ENCODE measurements at regions of chr13 and their contacts with region 1.

Region 1: DNA sequence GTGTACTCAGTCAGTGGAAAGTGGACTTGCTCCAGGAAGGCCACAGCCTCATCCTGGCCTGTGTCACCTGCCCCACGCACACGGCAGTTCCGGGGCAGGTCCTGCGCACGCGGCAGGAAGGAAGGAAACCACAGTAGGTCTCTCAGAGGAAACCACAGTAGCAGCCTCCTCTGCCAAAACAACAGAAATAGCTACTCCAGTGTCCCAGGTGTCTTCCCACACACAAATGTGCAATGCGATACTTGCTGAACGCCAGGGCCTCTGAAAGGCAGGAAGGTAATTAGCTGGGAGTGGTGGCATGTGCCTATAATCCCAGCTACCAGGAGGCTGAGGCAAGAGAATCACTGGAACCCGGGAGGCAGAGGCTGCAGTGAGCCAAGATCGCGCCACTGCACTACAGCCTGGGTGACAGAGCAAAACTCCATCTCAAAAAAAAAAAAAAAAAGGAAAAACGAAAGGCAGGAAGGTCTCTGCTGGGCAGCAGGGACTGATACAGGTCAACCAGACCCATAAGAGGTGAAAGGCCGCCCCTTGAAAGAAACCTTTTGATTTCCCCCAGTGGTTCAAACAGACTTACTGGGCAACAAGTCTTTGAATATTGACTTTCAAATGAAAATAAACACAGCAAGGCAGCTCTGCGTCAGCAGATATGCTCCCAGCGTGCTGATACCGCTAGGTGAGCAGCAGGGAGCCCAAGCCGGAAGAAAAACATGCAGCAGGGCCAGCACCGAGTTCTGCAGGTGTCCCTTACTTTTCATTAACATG is 49.5 kb downstream of the CRYL1 start:
- DNase-seq: peak; percentile 46 to 90 (median 84)
- ATAC-seq: peak; percentile 96
- H3K4me3 ChIP-seq: peak overlapping the region; percentile 59
- H3K4me3 Mint-ChIP-seq: peak overlapping the region; percentile 77 to 92 (median 86)
- H3K27ac ChIP-seq: peak overlapping the region; percentile 77
- H3K27ac Mint-ChIP-seq: peak overlapping the region; percentile 89 to 99 (median 98)
- H3K4me1 ChIP-seq: peaks cover 21 to 25% of the 10 kb centered on the region in 2 donors
- H3K4me1 Mint-ChIP-seq: peaks cover 18 to 79% (median 55%) of the 10 kb centered on the region in 7 donors
- H3K27me3 ChIP-seq: no peaks in the 10 kb centered on the region
- H3K27me3 Mint-ChIP-seq: peaks cover 0 to 5% (median 0%) of the 10 kb centered on the region in 5 donors

Region 2: DNA sequence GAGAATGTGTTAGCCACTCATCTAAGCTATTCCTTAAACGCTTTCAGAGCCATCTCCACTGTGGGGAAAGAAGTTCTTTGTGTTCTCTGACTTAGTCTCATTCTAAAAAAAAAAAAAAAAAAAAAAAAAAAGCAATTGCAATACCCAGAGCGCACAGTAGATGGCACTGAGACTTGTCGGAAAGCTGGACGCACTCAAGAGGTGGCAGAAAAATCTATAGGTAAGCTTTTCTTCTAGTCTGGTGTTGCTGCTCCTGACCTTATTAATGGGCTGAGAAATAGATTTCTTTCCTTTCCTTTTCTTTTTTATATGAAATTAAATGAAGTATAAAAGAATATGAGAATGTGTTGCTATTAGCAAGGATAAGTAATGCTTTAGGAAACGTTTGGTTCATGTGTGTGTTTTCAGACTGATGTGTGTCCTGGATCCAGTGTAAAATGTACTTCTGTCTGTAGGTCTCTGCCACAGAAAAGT is 278.7 kb before region 1 on chr13:
- CTCF ChIA-PET with region 1: no interaction called
- POLR2A ChIA-PET with region 1: no interaction called
- intact Hi-C with region 1: loop called in 1 of 2 experiments (anchors 1 kb)
- DNase-seq: peak in 5 of 9 donors; percentile 38 to 59 (median 51)
- ATAC-seq: peak; percentile 81
- H3K4me3 ChIP-seq: no peak overlapping the region
- H3K4me3 Mint-ChIP-seq: no peak overlapping the region
- H3K27ac ChIP-seq: no peak overlapping the region
- H3K27ac Mint-ChIP-seq: peak overlapping the region in 1 of 9 donors; percentile 57
- H3K4me1 ChIP-seq: peaks cover 11 to 20% of the 10 kb centered on the region in 2 donors
- H3K4me1 Mint-ChIP-seq: peaks cover 15 to 26% (median 19%) of the 10 kb centered on the region in 7 donors
- H3K27me3 ChIP-seq: peaks cover 27 to 41% of the 10 kb centered on the region in 2 donors
- H3K27me3 Mint-ChIP-seq: peaks cover 30 to 64% (median 48%) of the 10 kb centered on the region in 5 donors

Region 3: DNA sequence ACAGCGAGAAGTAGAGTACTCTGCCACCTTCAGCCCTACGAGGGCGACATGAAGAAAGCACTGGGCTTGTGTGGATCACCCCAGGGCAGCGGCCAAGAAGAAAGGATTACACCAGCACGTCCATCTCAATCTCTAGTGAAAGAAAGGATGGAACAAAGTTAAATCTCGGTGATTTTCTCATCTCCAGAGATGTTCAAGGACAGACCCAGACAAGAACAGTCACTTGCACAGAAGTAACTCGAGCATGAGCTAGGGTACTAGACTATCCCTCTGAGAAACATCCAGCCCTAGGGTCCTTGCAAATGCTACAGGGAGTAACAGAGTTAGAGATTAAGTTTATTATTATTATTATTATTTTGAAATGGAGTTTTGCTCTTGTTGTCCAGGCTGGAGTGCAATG is 57.2 kb before region 1 on chr13:
- CTCF ChIA-PET with region 1: no interaction called
- POLR2A ChIA-PET with region 1: no interaction called
- intact Hi-C with region 1: loop called (anchors 1 to 5 kb)
- DNase-seq: no peak
- ATAC-seq: no peak
- H3K4me3 ChIP-seq: no peak overlapping the region
- H3K4me3 Mint-ChIP-seq: peak overlapping the region in 6 of 10 donors; percentile 2 to 42 (median 14)
- H3K27ac ChIP-seq: no peak overlapping the region
- H3K27ac Mint-ChIP-seq: peak overlapping the region in 6 of 9 donors; percentile 9 to 71 (median 34)
- H3K4me1 ChIP-seq: peaks cover 9 to 13% of the 10 kb centered on the region in 2 donors
- H3K4me1 Mint-ChIP-seq: peaks cover 12 to 42% (median 30%) of the 10 kb centered on the region in 7 donors
- H3K27me3 ChIP-seq: no peaks in the 10 kb centered on the region
- H3K27me3 Mint-ChIP-seq: no peaks in the 10 kb centered on the region

Region 4: GRCh38 chr13:20495082-20496023 is 19.2 kb after region 1 on chr13:
- CTCF ChIA-PET with region 1: interaction called, 3 read pairs
- POLR2A ChIA-PET with region 1: interaction called, 9 read pairs
- intact Hi-C with region 1: loop called in 1 of 2 experiments (anchors 1 kb)
- DNase-seq: peak in 8 of 9 donors; percentile 41 to 75 (median 70)
- ATAC-seq: peak; percentile 95
- H3K4me3 ChIP-seq: no peak overlapping the region
- H3K4me3 Mint-ChIP-seq: no peak overlapping the region
- H3K27ac ChIP-seq: no peak overlapping the region
- H3K27ac Mint-ChIP-seq: peak overlapping the region in 5 of 9 donors; percentile 29 to 87 (median 52)
- H3K4me1 ChIP-seq: no peaks in the 10 kb centered on the region
- H3K4me1 Mint-ChIP-seq: peaks cover 5 to 17% (median 13%) of the 10 kb centered on the region in 7 donors
- H3K27me3 ChIP-seq: no peaks in the 10 kb centered on the region
- H3K27me3 Mint-ChIP-seq: no peaks in the 10 kb centered on the region

Region 5: DNA sequence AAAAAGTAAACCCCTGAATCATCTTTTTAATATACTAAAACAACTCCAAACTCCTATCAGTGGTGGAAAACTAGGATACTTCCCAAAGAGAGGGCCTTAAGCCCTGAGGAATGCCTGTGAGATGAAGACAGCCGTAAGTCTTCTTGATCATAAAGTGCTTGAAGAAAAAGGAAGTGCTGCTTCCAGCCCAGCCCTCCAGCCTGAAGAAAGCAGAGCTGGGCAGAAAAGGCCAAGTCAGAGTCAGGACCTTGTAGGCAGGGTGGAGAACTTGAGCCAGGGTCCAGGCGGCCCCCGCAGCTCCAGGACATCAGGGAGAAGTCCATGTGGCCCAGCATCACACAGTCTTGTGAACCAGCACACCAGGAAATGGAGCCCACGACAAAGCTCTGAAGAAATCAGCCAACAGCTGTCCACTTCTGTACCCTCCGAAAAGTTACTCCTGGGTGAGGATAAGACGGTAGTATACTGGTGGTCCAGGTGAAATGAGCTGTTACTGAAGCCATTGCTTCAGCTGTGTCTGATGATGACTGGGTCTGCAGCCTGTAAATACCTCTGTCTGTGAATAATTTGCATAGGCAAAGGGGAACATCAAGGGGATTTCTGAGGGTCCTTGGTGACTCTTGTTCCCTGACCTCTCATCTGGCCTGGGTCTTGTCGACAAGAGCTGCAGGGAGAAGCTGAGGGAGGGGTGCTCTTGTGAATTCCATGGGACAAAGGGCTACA is 68.3 kb after region 1 on chr13:
- CTCF ChIA-PET with region 1: no interaction called
- POLR2A ChIA-PET with region 1: no interaction called
- intact Hi-C with region 1: no loop called
- DNase-seq: no peak
- ATAC-seq: no peak
- H3K4me3 ChIP-seq: no peak overlapping the region
- H3K4me3 Mint-ChIP-seq: no peak overlapping the region
- H3K27ac ChIP-seq: no peak overlapping the region
- H3K27ac Mint-ChIP-seq: no peak overlapping the region
- H3K4me1 ChIP-seq: no peaks in the 10 kb centered on the region
- H3K4me1 Mint-ChIP-seq: peaks cover 3 to 15% (median 11%) of the 10 kb centered on the region in 7 donors
- H3K27me3 ChIP-seq: no peaks in the 10 kb centered on the region
- H3K27me3 Mint-ChIP-seq: no peaks in the 10 kb centered on the region

Region 6: DNA sequence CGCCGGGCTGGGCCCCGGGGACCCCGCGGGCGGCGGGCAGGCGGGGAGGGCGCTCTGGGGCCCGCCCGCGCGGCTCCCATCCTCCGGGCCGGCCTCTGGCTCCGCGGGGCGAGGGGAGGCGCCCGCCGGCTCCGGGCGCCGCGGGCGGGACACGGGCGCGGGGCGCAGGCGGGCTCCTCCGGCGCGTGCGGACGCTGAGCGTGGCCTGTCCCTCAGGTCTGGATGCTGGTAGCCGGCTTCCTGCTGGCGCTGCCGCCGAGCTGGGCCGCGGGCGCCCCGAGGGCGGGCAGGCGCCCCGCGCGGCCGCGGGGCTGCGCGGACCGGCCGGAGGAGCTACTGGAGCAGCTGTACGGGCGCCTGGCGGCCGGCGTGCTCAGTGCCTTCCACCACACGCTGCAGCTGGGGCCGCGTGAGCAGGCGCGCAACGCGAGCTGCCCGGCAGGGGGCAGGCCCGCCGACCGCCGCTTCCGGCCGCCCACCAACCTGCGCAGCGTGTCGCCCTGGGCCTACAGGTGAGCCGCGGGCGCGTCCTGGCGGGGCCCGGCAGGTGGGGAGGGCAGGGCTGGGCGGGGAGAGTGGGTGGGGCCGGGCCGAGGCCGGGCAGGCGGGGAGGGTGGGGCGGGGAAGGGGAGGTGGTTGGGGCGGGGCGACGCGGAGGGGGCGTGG is 227.8 kb after region 1 on chr13:
- CTCF ChIA-PET with region 1: no interaction called
- POLR2A ChIA-PET with region 1: interaction called, 3 read pairs
- intact Hi-C with region 1: loop called in 1 of 2 experiments (anchors 5 kb)
- DNase-seq: peak; percentile 70 to 84 (median 80)
- ATAC-seq: peak; percentile 93
- H3K4me3 ChIP-seq: no peak overlapping the region
- H3K4me3 Mint-ChIP-seq: peak overlapping the region in 4 of 10 donors; percentile 59 to 97 (median 72)
- H3K27ac ChIP-seq: no peak overlapping the region
- H3K27ac Mint-ChIP-seq: peak overlapping the region in 1 of 9 donors; percentile 56
- H3K4me1 ChIP-seq: peaks cover 3 to 8% of the 10 kb centered on the region in 2 donors
- H3K4me1 Mint-ChIP-seq: peaks cover 0 to 13% (median 8%) of the 10 kb centered on the region in 7 donors
- H3K27me3 ChIP-seq: peaks cover 0 to 5% of the 10 kb centered on the region in 2 donors
- H3K27me3 Mint-ChIP-seq: peaks cover 13 to 48% (median 17%) of the 10 kb centered on the region in 5 donors

Region 7: GRCh38 chr13:20714161-20714560 is 238.1 kb after region 1 on chr13:
- CTCF ChIA-PET with region 1: no interaction called
- POLR2A ChIA-PET with region 1: no interaction called
- intact Hi-C with region 1: no loop called
- DNase-seq: no peak
- ATAC-seq: no peak
- H3K4me3 ChIP-seq: no peak overlapping the region
- H3K4me3 Mint-ChIP-seq: no peak overlapping the region
- H3K27ac ChIP-seq: no peak overlapping the region
- H3K27ac Mint-ChIP-seq: no peak overlapping the region
- H3K4me1 ChIP-seq: no peaks in the 10 kb centered on the region
- H3K4me1 Mint-ChIP-seq: peaks cover 5 to 13% (median 8%) of the 10 kb centered on the region in 7 donors
- H3K27me3 ChIP-seq: no peaks in the 10 kb centered on the region
- H3K27me3 Mint-ChIP-seq: peaks cover 0 to 7% (median 6%) of the 10 kb centered on the region in 5 donors

Region 8: DNA sequence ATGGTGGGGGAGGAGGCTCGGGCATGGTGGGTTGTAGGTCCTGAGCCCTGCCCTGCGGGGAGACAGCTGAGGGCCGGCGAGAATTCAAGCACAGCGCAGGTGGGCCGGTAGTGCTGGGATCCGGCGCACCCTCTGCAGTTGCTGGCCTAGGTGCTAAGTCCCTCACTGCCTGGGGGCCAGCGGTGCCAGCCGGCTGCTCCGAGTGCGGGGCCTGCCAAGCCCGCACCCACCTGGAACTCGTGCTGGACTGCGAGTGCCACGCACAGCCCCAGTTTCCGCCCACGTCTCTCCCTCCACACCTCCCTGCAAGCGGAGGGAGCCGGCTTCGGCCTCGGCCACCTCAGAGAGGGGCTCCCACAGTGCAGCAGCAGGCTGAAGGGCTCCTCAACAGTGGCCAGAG is 263.9 kb after region 1 on chr13:
- CTCF ChIA-PET with region 1: no interaction called
- POLR2A ChIA-PET with region 1: no interaction called
- intact Hi-C with region 1: no loop called
- DNase-seq: no peak
- ATAC-seq: no peak
- H3K4me3 ChIP-seq: no peak overlapping the region
- H3K4me3 Mint-ChIP-seq: no peak overlapping the region
- H3K27ac ChIP-seq: no peak overlapping the region
- H3K27ac Mint-ChIP-seq: no peak overlapping the region
- H3K4me1 ChIP-seq: no peaks in the 10 kb centered on the region
- H3K4me1 Mint-ChIP-seq: peaks cover 0 to 5% (median 0%) of the 10 kb centered on the region in 7 donors
- H3K27me3 ChIP-seq: no peaks in the 10 kb centered on the region
- H3K27me3 Mint-ChIP-seq: no peaks in the 10 kb centered on the region

Region 9: GRCh38 chr13:21176220-21176982 is 700.3 kb after region 1 on chr13 and contains the starts of genes MRPL57 and SKA3:
- CTCF ChIA-PET with region 1: no interaction called
- POLR2A ChIA-PET with region 1: interaction called, 3 read pairs
- intact Hi-C with region 1: loop called in 1 of 2 experiments (anchors 5 kb)
- DNase-seq: peak; percentile 90 to 97 (median 94)
- ATAC-seq: peak; percentile 97
- H3K4me3 ChIP-seq: peak within 1 kb of the TSS; percentile 86
- H3K4me3 Mint-ChIP-seq: peak within 1 kb of the TSS; percentile 95 to 99 (median 97)
- H3K27ac ChIP-seq: peak within 1 kb of the TSS; percentile 95
- H3K27ac Mint-ChIP-seq: peak within 1 kb of the TSS; percentile 80 to 97 (median 95)
- H3K4me1 ChIP-seq: peaks cover 10 to 16% of the 10 kb centered on the region in 2 donors
- H3K4me1 Mint-ChIP-seq: peaks cover 13 to 31% (median 22%) of the 10 kb centered on the region in 7 donors
- H3K27me3 ChIP-seq: no peaks in the 10 kb centered on the region
- H3K27me3 Mint-ChIP-seq: no peaks in the 10 kb centered on the region
- total RNA-seq, gene MRPL57: 10.6 to 22.8 (median 19.8) TPM
- total RNA-seq, gene SKA3: 0.46 to 35.0 (median 1.6) TPM in 4 of 5 experiments, not detected in the other